ENCODE measurements at regions of chr14 and their contacts with region 1.

Region 1: DNA sequence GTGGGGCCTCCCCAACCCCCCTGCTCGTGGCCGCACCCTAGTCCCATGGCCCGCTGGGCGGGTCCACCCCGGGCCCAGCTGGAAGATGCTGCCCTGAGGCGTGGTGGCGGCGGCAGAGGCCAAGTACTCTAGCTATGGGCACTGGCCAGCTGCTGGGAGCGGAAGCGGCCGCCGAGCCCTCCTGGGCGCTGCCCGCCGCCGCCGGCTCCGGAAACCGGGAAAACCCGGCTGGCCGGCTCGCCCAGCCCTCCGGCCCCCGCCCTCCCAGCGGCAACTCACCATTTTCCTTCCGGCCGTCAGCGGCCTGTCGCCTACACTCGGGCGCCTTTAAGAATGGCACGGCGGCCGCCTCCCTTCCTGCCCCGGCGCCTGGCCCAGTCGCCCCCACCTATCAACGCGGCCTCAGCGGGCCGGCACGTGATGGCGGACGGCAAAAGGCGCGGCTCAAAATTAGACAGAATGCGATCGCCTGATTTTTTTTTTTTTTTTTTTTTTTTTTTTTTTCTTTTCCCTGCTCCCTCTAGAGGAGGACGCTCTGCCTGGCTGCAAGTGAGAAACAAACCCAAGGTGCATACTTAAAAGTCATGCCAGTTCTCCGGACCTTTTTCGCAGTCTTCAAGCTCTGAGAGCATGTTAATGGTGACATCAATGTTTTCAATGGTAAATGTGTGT is at the start of gene GMFB:
- DNase-seq: peak; percentile 93
- H3K4me3 Mint-ChIP-seq: peak within 1 kb of the TSS; percentile 73
- H3K27ac Mint-ChIP-seq: peak within 1 kb of the TSS; percentile 78
- H3K4me1 Mint-ChIP-seq: peaks cover 30% of the 10 kb centered on the region
- H3K27me3 Mint-ChIP-seq: no peaks in the 10 kb centered on the region
- CTCF ChIP-seq: peak; percentile 22
- total RNA-seq, gene GMFB: 53.3 and 65.0 TPM in 2 replicates

Region 2: GRCh38 chr14:54291491-54292191 is 197.1 kb before region 1 on chr14:
- CTCF ChIA-PET with region 1: no interaction called
- POLR2A ChIA-PET with region 1: no interaction called
- intact Hi-C with region 1: no loop called
- DNase-seq: no peak
- H3K4me3 Mint-ChIP-seq: no peak overlapping the region
- H3K27ac Mint-ChIP-seq: no peak overlapping the region
- H3K4me1 Mint-ChIP-seq: peaks cover 8% of the 10 kb centered on the region
- H3K27me3 Mint-ChIP-seq: no peaks in the 10 kb centered on the region
- CTCF ChIP-seq: no peak

Region 3: DNA sequence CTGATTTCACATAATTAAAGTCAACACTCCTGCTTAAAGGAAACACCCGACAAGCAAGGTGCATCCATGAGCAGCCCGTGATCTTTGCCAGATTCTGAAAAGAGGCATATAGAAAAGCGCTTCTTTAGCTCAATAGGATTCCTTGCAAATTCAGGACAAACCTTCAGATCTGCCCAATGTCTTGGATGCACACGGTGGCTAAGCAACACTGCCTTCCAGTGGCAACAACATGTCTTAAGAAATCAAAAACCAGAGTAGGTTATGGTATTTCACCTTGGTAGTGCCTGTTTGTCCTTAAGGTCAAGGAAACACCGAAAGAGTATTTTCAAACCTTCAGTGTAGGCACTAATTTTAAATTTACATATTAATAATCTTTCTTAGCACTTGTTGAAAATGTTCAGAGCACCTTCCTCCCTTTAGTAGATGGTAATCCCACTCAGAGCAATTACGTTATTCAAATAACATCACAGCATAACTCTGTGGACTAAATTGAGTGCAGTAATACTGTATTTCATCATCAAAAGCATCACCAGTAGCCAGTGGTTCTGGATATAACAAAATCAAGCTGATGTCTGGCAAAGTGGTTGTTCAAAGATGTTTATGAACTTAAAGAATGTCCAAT is 150.0 kb before region 1 on chr14:
- CTCF ChIA-PET with region 1: no interaction called
- POLR2A ChIA-PET with region 1: no interaction called
- intact Hi-C with region 1: no loop called
- DNase-seq: peak; percentile 67
- H3K4me3 Mint-ChIP-seq: no peak overlapping the region
- H3K27ac Mint-ChIP-seq: no peak overlapping the region
- H3K4me1 Mint-ChIP-seq: peaks cover 6% of the 10 kb centered on the region
- H3K27me3 Mint-ChIP-seq: no peaks in the 10 kb centered on the region
- CTCF ChIP-seq: peak; percentile 69

Region 4: GRCh38 chr14:54435500-54435981 is 53.2 kb before region 1 on chr14:
- CTCF ChIA-PET with region 1: interaction called, 5 read pairs
- POLR2A ChIA-PET with region 1: interaction called, 58 read pairs
- intact Hi-C with region 1: no loop called
- DNase-seq: peak; percentile 30
- H3K4me3 Mint-ChIP-seq: peak overlapping the region; percentile 54
- H3K27ac Mint-ChIP-seq: peak overlapping the region; percentile 85
- H3K4me1 Mint-ChIP-seq: peaks cover 43% of the 10 kb centered on the region
- H3K27me3 Mint-ChIP-seq: no peaks in the 10 kb centered on the region
- CTCF ChIP-seq: no peak

Region 5: DNA sequence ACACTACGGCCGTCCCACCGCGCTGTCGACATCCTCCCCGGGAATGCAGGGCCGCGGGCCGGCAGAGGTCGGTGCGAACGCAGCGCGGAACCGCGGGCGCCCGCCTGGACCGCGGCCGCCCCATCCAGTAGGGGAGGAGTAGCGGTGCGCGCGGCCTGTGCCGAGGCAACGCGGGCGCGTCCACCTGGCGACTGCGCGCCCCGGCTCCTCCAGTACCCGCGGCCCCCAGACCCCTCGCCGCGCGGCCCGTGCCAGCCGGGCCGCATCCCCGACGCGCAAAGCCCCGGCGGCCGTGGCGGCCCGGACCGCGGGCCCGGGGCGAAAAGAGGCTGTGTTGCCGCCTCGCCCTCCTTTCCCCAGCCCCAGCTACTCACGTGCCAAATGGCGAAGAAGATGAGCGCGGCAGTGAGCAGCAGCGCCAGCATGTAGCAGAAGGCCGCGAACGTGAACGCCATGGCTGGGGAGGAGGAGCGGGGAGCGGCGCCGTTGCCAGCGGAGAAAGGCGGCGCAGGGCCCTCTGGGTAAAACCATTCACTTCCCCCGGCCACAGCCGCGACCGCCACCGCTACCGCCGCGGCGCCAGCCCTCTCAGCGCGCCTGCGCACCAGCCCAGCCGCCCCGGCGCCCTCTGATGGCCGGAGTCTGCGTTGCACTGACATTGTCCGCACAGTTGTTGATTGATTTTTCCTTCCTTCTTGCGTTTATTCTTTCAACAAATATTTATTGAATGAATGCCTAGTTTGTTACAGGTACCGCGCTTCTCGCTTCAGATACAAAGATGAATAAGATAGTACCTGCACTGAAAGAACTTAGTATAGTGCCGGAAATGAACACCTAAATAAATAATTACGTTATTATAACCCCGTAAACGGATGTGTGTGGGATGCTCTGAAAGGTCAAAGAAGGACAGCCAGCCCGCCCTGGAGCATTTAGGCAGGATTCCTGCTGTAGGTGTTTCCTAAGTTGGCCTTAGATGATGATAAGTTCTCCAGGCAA is 47.6 kb before region 1 on chr14 and contains the start of gene CNIH1:
- CTCF ChIA-PET with region 1: interaction called, 20 read pairs
- POLR2A ChIA-PET with region 1: interaction called, 100 read pairs
- intact Hi-C with region 1: loop called (anchors 1 kb)
- DNase-seq: peak; percentile 91
- H3K4me3 Mint-ChIP-seq: peak within 1 kb of the TSS; percentile 88
- H3K27ac Mint-ChIP-seq: peak within 1 kb of the TSS; percentile 93
- H3K4me1 Mint-ChIP-seq: peaks cover 26% of the 10 kb centered on the region
- H3K27me3 Mint-ChIP-seq: no peaks in the 10 kb centered on the region
- CTCF ChIP-seq: peak; percentile 78
- total RNA-seq, gene CNIH1: 217 and 228 TPM in 2 replicates

Region 6: GRCh38 chr14:54475187-54475899 is 13.4 kb before region 1 on chr14:
- CTCF ChIA-PET with region 1: no interaction called
- POLR2A ChIA-PET with region 1: interaction called, 34 read pairs
- intact Hi-C with region 1: no loop called
- DNase-seq: no peak
- H3K4me3 Mint-ChIP-seq: no peak overlapping the region
- H3K27ac Mint-ChIP-seq: no peak overlapping the region
- H3K4me1 Mint-ChIP-seq: no peaks in the 10 kb centered on the region
- H3K27me3 Mint-ChIP-seq: no peaks in the 10 kb centered on the region
- CTCF ChIP-seq: no peak

Region 7: GRCh38 chr14:54509546-54510501 is 21.0 kb after region 1 on chr14 and contains the start of gene CGRRF1:
- CTCF ChIA-PET with region 1: interaction called, 10 read pairs
- POLR2A ChIA-PET with region 1: interaction called, 24 read pairs
- intact Hi-C with region 1: no loop called
- DNase-seq: peak; percentile 97
- H3K4me3 Mint-ChIP-seq: peak within 1 kb of the TSS; percentile 96
- H3K27ac Mint-ChIP-seq: peak within 1 kb of the TSS; percentile 86
- H3K4me1 Mint-ChIP-seq: peaks cover 20% of the 10 kb centered on the region
- H3K27me3 Mint-ChIP-seq: no peaks in the 10 kb centered on the region
- CTCF ChIP-seq: peak; percentile 30
- total RNA-seq, gene CGRRF1: 17.5 and 22.3 TPM in 2 replicates